ENCODE measurements at regions of chr6 and their contacts with region 1.

Region 1: GRCh38 chr6:157461000-157461915 is 80.3 kb downstream of the ZDHHC14 start:
- DNase-seq: peak; percentile 64
- ATAC-seq: peak; percentile 65
- H3K4me3 Mint-ChIP-seq: peak overlapping the region; percentile 67
- H3K27ac Mint-ChIP-seq: peak overlapping the region; percentile 95
- H3K4me1 Mint-ChIP-seq: peaks cover 81% of the 10 kb centered on the region
- H3K27me3 Mint-ChIP-seq: no peaks in the 10 kb centered on the region
- CTCF ChIP-seq: no peak

Region 2: DNA sequence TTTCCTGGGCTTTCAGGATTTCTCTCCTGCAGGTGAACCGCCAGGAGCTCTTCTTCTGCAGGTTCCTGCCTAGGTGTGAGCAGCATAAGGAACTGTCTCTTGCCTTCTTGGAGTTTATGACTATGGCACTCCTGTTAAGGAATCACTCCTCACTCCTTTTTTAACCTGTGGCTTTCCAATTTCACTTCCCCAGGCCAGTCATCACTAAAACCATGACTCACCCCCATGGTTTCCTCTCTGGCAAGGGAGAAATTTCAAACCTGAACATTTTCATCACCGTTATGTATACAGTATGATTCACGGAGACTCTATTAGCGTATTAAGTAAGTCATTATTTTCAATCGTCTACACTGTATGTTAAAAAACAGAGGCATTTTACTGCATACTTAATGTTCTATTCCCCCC is 762.2 kb before region 1 on chr6:
- CTCF ChIA-PET with region 1: no interaction called
- POLR2A ChIA-PET with region 1: no interaction called
- intact Hi-C with region 1: loop called (anchors 10 kb)
- DNase-seq: no peak
- ATAC-seq: peak; percentile 45
- H3K4me3 Mint-ChIP-seq: peak overlapping the region; percentile 74
- H3K27ac Mint-ChIP-seq: peak overlapping the region; percentile 92
- H3K4me1 Mint-ChIP-seq: peaks cover 79% of the 10 kb centered on the region
- H3K27me3 Mint-ChIP-seq: no peaks in the 10 kb centered on the region
- CTCF ChIP-seq: no peak

Region 3: GRCh38 chr6:157443066-157443800 is 18.0 kb before region 1 on chr6:
- CTCF ChIA-PET with region 1: no interaction called
- POLR2A ChIA-PET with region 1: interaction called, 10 read pairs
- intact Hi-C with region 1: no loop called
- DNase-seq: no peak
- ATAC-seq: peak; percentile 34
- H3K4me3 Mint-ChIP-seq: no peak overlapping the region
- H3K27ac Mint-ChIP-seq: peak overlapping the region; percentile 48
- H3K4me1 Mint-ChIP-seq: peaks cover 9% of the 10 kb centered on the region
- H3K27me3 Mint-ChIP-seq: no peaks in the 10 kb centered on the region
- CTCF ChIP-seq: no peak

Region 4: GRCh38 chr6:157563611-157564284 is 102.5 kb after region 1 on chr6:
- CTCF ChIA-PET with region 1: interaction called, 4 read pairs
- POLR2A ChIA-PET with region 1: interaction called, 34 read pairs
- intact Hi-C with region 1: loop called (anchors 1 kb)
- DNase-seq: no peak
- ATAC-seq: peak; percentile 69
- H3K4me3 Mint-ChIP-seq: peak overlapping the region; percentile 44
- H3K27ac Mint-ChIP-seq: peak overlapping the region; percentile 80
- H3K4me1 Mint-ChIP-seq: peaks cover 92% of the 10 kb centered on the region
- H3K27me3 Mint-ChIP-seq: no peaks in the 10 kb centered on the region
- CTCF ChIP-seq: no peak

Region 5: DNA sequence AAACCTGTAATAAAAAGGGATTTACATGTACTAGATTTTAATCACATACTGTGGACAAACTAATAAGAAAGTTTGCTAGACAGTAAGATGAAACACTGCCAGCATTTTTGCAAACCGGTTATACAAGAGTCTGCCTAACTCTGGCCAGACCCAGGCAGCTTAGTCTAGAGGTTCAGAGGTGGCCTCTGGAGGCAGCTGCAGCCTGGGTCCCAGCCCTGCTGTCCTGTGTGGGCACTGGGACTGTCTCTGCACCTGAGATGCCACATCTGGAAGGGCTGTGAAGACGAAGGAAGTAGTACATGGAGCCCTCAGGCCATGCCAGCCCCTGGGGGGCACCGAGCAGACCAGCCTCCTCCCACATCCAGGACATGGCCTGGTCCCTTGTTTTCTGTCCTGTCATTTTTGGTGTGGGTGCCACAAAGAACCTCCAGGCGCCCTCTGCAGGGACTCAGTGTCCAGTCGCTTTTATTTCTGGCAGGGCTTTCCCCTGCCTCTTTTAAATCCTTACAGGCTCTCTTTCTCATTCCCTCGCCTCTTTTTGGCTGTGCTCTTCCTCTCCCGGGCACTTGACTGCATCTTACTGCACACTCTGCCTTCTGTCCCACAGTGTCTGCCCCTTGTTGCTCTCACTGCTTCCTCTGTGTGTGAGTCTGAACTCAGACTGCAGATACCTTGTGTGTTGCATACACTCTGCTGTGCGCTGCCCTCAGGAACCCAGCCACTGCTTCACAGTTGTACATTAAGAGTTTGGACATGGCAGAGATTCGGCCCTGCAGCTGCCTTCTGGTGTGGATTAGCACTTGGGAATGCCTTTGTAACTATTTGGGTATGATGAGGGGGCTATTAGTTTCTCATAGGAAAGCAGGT is 136.4 kb after region 1 on chr6:
- CTCF ChIA-PET with region 1: interaction called, 4 read pairs
- POLR2A ChIA-PET with region 1: interaction called, 6 read pairs
- intact Hi-C with region 1: loop called (anchors 2 kb)
- DNase-seq: no peak
- ATAC-seq: peak; percentile 70
- H3K4me3 Mint-ChIP-seq: peak overlapping the region; percentile 46
- H3K27ac Mint-ChIP-seq: peak overlapping the region; percentile 71
- H3K4me1 Mint-ChIP-seq: peaks cover 54% of the 10 kb centered on the region
- H3K27me3 Mint-ChIP-seq: no peaks in the 10 kb centered on the region
- CTCF ChIP-seq: no peak

Region 6: DNA sequence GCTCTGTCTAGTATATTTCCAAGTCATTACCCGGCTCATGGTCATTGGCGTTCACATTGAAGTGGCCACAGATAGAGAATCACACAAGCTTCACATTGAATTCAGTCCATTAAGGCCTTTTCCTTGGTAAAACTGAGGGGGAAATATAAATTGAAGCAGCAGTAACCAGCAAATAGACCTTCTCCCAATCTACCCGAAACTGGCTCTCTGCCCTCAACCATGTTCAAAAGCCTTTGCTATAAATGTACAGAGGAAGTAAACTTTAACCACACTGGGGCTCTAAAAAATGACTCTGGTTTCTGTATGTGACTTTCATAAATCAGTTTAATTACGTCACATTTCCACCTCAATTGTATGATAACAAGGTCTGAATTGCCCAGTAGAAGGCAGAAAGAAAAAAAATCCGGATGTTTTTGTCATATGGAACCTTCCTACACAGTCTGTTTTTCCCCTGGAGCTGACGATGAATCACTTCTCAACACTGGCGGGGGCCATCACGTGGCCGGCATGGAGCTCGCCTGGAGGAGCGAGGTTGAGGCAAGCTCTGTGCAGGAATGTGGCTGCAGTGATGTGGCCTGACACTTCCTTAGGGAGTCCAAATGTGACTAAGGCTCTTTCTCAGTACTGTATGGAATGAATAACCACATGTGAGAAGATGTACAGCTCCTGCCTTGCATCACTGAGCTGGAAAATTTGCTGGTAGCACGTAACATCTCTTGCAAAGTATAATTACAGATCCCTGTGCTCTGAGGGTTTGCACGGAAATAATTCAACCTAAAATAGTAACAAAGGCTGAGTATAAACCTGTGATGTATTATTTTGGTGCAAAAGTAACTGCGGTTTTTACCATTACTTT is 303.1 kb after region 1 on chr6:
- CTCF ChIA-PET with region 1: no interaction called
- POLR2A ChIA-PET with region 1: interaction called, 3 read pairs
- intact Hi-C with region 1: loop called (anchors 1 kb)
- DNase-seq: peak; percentile 73
- ATAC-seq: peak; percentile 43
- H3K4me3 Mint-ChIP-seq: peak overlapping the region; percentile 81
- H3K27ac Mint-ChIP-seq: peak overlapping the region; percentile 99
- H3K4me1 Mint-ChIP-seq: peaks cover 95% of the 10 kb centered on the region
- H3K27me3 Mint-ChIP-seq: no peaks in the 10 kb centered on the region
- CTCF ChIP-seq: no peak

Measured in activated B cell treated with CpG ODN at 0.5 μM for 24 hours (primary cell).